ENCODE measurements at regions of chr10 and their contacts with region 1.

Region 1: GRCh38 chr10:90871766-90872647 is at the start of gene RPP30:
- DNase-seq: peak; percentile 67 to 88 (median 74)
- ATAC-seq: peak; percentile 98
- H3K4me3 ChIP-seq: peak within 1 kb of the TSS; percentile 95
- H3K4me3 Mint-ChIP-seq: peak within 1 kb of the TSS; percentile 96
- H3K27ac ChIP-seq: peak within 1 kb of the TSS; percentile 31 to 46
- H3K27ac Mint-ChIP-seq: peak within 1 kb of the TSS; percentile 84
- H3K4me1 ChIP-seq: peaks cover 16% of the 10 kb centered on the region
- H3K4me1 Mint-ChIP-seq: peaks cover 38% of the 10 kb centered on the region
- H3K27me3 ChIP-seq: peaks cover 0 to 22% of the 10 kb centered on the region in 2 experiments
- H3K27me3 Mint-ChIP-seq: peaks cover 33% of the 10 kb centered on the region
- CTCF ChIP-seq: no peak
- total RNA-seq, gene RPP30: 25.3 to 28.5 TPM

Region 2: DNA sequence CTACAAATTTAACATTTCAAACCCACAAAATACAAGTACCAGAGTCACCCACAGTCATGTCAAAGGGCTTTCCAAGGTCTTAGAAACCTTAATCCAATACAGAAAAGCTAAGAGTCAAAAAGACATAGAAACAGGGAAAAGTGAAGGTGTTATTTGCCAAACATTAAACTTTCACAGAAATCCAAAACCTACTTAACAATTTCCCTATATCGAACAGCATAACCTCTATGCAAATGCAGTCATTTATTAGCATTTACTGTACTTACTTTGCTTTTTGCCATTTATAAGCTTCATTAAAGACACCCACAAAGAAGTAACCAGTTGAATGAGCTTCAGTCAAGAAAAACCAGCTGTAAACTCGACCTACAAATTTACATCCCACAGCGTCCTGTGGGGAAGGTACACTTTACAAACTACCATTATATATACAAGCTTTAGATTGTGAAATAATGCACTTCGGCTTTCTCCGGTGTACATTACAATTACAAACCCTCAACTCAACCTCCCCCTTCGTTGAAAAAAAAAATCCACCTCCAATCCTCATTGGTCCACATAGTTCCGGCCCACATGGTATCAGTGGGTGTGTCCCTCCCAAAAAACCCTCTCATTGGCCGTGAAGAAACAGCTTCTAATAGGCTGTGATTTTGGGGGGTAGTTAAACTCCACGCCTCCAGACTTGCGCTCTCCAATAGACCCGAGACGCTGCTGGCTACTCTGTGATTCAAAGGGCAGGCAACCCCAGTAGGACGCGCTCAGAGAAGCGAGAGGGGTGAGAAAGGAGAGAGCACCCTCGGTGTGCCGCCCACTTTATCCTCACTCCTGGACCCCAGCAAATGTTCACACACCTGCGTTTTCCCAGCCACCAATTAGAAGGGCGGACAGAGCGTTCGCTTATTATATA is 1228.3 kb before region 1 on chr10:
- CTCF ChIA-PET with region 1: no interaction called
- POLR2A ChIA-PET with region 1: no interaction called
- intact Hi-C with region 1: loop called in 1 of 2 experiments (anchors 10 kb)
- DNase-seq: peak; percentile 7 to 87 (median 48)
- ATAC-seq: peak; percentile 84
- H3K4me3 ChIP-seq: peak overlapping the region; percentile 77
- H3K4me3 Mint-ChIP-seq: no peak overlapping the region
- H3K27ac ChIP-seq: no peak overlapping the region
- H3K27ac Mint-ChIP-seq: no peak overlapping the region
- H3K4me1 ChIP-seq: peaks cover 16% of the 10 kb centered on the region
- H3K4me1 Mint-ChIP-seq: peaks cover 8% of the 10 kb centered on the region
- H3K27me3 ChIP-seq: no peaks in the 10 kb centered on the region
- H3K27me3 Mint-ChIP-seq: no peaks in the 10 kb centered on the region
- CTCF ChIP-seq: no peak

Region 3: DNA sequence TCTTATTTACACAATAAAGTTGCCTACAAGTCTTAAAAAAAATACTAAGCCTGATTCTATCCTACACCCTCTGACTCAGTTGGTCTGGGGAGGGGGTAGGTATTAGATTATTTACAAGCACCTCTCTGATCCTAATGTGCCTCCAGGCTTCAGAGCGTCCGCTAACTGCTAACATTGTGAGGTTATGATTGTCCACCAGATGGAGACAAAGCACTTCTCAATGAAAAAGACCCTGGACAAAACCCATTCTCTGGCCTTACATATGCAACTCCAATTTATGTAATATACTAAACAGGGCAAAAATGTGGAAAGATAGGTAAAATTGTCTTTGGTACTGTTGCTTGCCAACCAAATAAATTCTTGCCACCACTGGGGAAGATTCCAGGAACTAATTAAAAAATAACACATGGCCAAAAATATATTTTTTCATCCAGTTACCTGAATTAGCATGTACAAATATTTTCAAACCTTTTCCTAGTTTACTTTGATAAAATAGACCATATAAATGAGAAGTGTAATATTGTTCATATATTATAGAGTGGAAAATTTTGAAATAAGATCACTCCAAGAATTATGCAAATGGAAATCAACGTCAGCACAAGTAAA is 1078.3 kb before region 1 on chr10:
- CTCF ChIA-PET with region 1: no interaction called
- POLR2A ChIA-PET with region 1: no interaction called
- intact Hi-C with region 1: loop called (anchors 1 to 2 kb)
- DNase-seq: peak in 8 of 14 experiments; percentile 5 to 77 (median 27)
- ATAC-seq: peak; percentile 52
- H3K4me3 ChIP-seq: no peak overlapping the region
- H3K4me3 Mint-ChIP-seq: no peak overlapping the region
- H3K27ac ChIP-seq: no peak overlapping the region
- H3K27ac Mint-ChIP-seq: no peak overlapping the region
- H3K4me1 ChIP-seq: no peaks in the 10 kb centered on the region
- H3K4me1 Mint-ChIP-seq: no peaks in the 10 kb centered on the region
- H3K27me3 ChIP-seq: peaks cover 0 to 4% of the 10 kb centered on the region in 2 experiments
- H3K27me3 Mint-ChIP-seq: peaks cover 22% of the 10 kb centered on the region
- CTCF ChIP-seq: peak; percentile 85

Region 4: GRCh38 chr10:90642136-90642535 is 229.9 kb before region 1 on chr10:
- CTCF ChIA-PET with region 1: no interaction called
- POLR2A ChIA-PET with region 1: no interaction called
- intact Hi-C with region 1: no loop called
- DNase-seq: no peak
- ATAC-seq: no peak
- H3K4me3 ChIP-seq: no peak overlapping the region
- H3K4me3 Mint-ChIP-seq: no peak overlapping the region
- H3K27ac ChIP-seq: no peak overlapping the region
- H3K27ac Mint-ChIP-seq: no peak overlapping the region
- H3K4me1 ChIP-seq: no peaks in the 10 kb centered on the region
- H3K4me1 Mint-ChIP-seq: no peaks in the 10 kb centered on the region
- H3K27me3 ChIP-seq: no peaks in the 10 kb centered on the region
- H3K27me3 Mint-ChIP-seq: no peaks in the 10 kb centered on the region
- CTCF ChIP-seq: no peak

Region 5: GRCh38 chr10:90885176-90885575 is 13.2 kb after region 1 on chr10:
- CTCF ChIA-PET with region 1: interaction called, 11 read pairs
- POLR2A ChIA-PET with region 1: interaction called, 7 read pairs
- intact Hi-C with region 1: no loop called
- DNase-seq: no peak
- ATAC-seq: no peak
- H3K4me3 ChIP-seq: no peak overlapping the region
- H3K4me3 Mint-ChIP-seq: no peak overlapping the region
- H3K27ac ChIP-seq: no peak overlapping the region
- H3K27ac Mint-ChIP-seq: no peak overlapping the region
- H3K4me1 ChIP-seq: no peaks in the 10 kb centered on the region
- H3K4me1 Mint-ChIP-seq: peaks cover 9% of the 10 kb centered on the region
- H3K27me3 ChIP-seq: no peaks in the 10 kb centered on the region
- H3K27me3 Mint-ChIP-seq: no peaks in the 10 kb centered on the region
- CTCF ChIP-seq: no peak

Region 6: GRCh38 chr10:91409869-91410637 is 538.0 kb after region 1 on chr10 and contains the start of gene HECTD2:
- CTCF ChIA-PET with region 1: no interaction called
- POLR2A ChIA-PET with region 1: no interaction called
- intact Hi-C with region 1: loop called in 1 of 2 experiments (anchors 10 kb)
- DNase-seq: peak; percentile 61 to 94 (median 82)
- ATAC-seq: peak; percentile 85
- H3K4me3 ChIP-seq: peak within 1 kb of the TSS; percentile 92
- H3K4me3 Mint-ChIP-seq: peak within 1 kb of the TSS; percentile 92
- H3K27ac ChIP-seq: peak within 1 kb of the TSS; percentile 82 to 86
- H3K27ac Mint-ChIP-seq: peak within 1 kb of the TSS; percentile 86
- H3K4me1 ChIP-seq: peaks cover 14% of the 10 kb centered on the region
- H3K4me1 Mint-ChIP-seq: peaks cover 11% of the 10 kb centered on the region
- H3K27me3 ChIP-seq: peaks cover 3 to 8% of the 10 kb centered on the region in 2 experiments
- H3K27me3 Mint-ChIP-seq: no peaks in the 10 kb centered on the region
- CTCF ChIP-seq: peak; percentile 19
- total RNA-seq, gene HECTD2: 0.92 to 1.0 TPM

Region 7: GRCh38 chr10:92290837-92291615 is 1419.0 kb after region 1 on chr10 and contains the starts of genes CPEB3 and MARCHF5:
- CTCF ChIA-PET with region 1: no interaction called
- POLR2A ChIA-PET with region 1: interaction called, 3 read pairs
- intact Hi-C with region 1: loop called in 1 of 2 experiments (anchors 10 kb)
- DNase-seq: peak; percentile 80 to 97 (median 87)
- ATAC-seq: peak; percentile 97
- H3K4me3 ChIP-seq: peak within 1 kb of the TSS; percentile 97
- H3K4me3 Mint-ChIP-seq: peak within 1 kb of the TSS; percentile 97
- H3K27ac ChIP-seq: peak within 1 kb of the TSS; percentile 37 to 50
- H3K27ac Mint-ChIP-seq: peak within 1 kb of the TSS; percentile 87
- H3K4me1 ChIP-seq: peaks cover 29% of the 10 kb centered on the region
- H3K4me1 Mint-ChIP-seq: peaks cover 33% of the 10 kb centered on the region
- H3K27me3 ChIP-seq: no peaks in the 10 kb centered on the region
- H3K27me3 Mint-ChIP-seq: no peaks in the 10 kb centered on the region
- CTCF ChIP-seq: peak; percentile 44
- total RNA-seq, gene CPEB3: 1.2 to 1.3 TPM
- total RNA-seq, gene MARCHF5: 33.5 to 36.1 TPM